Activated B cell treated with CpG ODN at 0.5 μM for 24 hours (primary cell): ENCODE measurements at regions of chr11 and their contacts with region 1.

Region 1: DNA sequence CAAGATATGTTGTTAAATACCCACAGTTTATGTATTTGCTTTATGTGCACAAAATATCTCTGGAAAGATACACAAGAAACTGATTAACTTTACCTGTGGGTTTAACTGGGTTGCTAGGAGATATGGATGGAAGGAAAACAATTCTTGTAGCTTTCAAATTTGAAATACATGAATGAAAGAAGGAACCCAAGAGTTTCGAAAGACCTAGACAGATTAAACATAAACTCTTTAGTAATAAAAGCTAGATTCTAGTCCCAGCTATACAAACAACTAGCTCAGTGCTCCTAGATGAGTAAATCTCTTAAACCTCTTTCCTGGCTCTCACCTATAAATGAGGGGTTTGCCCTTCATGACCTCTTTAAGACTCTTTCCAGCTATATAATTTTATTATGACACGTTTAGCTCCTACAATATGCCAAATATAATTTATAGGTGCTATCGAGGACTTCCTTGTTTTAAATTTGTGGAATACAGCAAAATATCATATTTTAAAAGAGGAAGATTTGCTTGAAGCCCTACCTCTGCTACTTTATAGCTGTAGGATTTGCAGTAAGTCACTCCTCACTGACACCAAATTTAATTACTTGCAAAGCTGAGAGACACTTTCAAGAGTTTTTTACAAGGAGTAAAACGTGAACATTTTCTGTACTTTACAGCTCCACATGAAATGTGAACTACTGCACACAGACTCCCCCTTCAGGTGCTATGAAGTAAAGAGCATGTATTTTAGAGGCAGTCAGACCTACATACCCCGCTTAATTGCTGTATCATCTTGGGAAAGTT is 50.7 kb downstream of the RRAS2 start:
- DNase-seq: no peak
- ATAC-seq: peak; percentile 51
- H3K4me3 Mint-ChIP-seq: no peak overlapping the region
- H3K27ac Mint-ChIP-seq: no peak overlapping the region
- H3K4me1 Mint-ChIP-seq: peaks cover 43% of the 10 kb centered on the region
- H3K27me3 Mint-ChIP-seq: no peaks in the 10 kb centered on the region
- CTCF ChIP-seq: peak; percentile 58

Region 2: DNA sequence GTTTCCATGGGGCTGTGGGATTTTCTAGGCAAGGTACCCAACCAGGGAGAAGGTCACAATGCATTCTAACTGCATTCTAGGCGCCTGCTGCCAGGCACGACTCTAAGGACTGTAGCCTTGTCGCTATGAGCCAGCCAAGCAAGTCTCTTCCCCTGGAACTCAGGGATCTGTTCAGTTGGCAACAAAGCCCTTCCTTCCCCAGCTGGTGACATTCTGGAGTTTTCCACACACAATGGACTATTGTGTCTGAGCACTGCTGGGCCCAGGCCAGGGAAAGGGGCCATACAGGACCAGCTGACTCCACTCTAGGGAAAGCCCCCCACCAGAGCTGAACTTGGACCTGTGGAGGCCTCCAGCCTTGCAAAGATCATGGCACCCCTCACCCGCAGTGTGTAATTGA is 66.1 kb before region 1 on chr11:
- CTCF ChIA-PET with region 1: no interaction called
- POLR2A ChIA-PET with region 1: no interaction called
- intact Hi-C with region 1: no loop called
- DNase-seq: no peak
- ATAC-seq: no peak
- H3K4me3 Mint-ChIP-seq: no peak overlapping the region
- H3K27ac Mint-ChIP-seq: no peak overlapping the region
- H3K4me1 Mint-ChIP-seq: peaks cover 20% of the 10 kb centered on the region
- H3K27me3 Mint-ChIP-seq: peaks cover 9% of the 10 kb centered on the region
- CTCF ChIP-seq: no peak

Region 3: GRCh38 chr11:14320020-14320419 is 11.7 kb after region 1 on chr11:
- CTCF ChIA-PET with region 1: interaction called, 4 read pairs
- POLR2A ChIA-PET with region 1: interaction called, 35 read pairs
- intact Hi-C with region 1: no loop called
- DNase-seq: no peak
- ATAC-seq: no peak
- H3K4me3 Mint-ChIP-seq: peak overlapping the region; percentile 65
- H3K27ac Mint-ChIP-seq: peak overlapping the region; percentile 83
- H3K4me1 Mint-ChIP-seq: peaks cover 93% of the 10 kb centered on the region
- H3K27me3 Mint-ChIP-seq: no peaks in the 10 kb centered on the region
- CTCF ChIP-seq: no peak

Region 4: DNA sequence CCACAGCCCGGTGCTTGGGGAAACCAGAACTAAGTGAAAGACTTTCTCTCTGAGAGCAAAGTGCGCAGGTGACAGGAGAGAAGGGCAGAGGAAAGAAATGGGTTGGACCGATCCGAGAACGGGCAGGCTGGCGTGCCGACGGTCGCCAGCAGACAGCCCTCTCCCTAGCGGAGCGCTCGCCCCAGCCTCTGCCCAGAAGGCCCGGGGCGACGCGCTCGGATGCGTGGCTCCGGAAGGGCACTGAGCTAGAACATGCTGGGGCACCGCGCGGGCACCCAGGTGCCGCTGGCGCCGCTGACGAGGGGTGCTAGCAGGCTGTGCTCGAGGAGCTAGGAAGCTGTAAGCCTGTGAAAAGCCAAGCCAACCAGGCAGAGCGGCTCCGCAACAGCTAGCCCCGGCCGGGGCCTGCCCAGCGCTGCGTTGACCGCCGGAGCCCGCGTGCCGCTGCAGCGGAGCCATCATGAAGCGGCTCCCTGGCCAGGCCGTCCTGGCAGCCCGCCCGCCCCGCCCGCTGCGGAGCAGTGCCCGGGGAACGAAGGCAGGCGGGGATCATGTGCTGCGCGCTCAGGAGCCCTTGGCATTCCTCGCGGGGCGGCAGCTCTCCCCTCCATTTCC is 72.7 kb after region 1 on chr11:
- CTCF ChIA-PET with region 1: interaction called, 6 read pairs
- POLR2A ChIA-PET with region 1: interaction called, 3 read pairs
- intact Hi-C with region 1: loop called (anchors 2 kb)
- DNase-seq: peak; percentile 64
- ATAC-seq: peak; percentile 96
- H3K4me3 Mint-ChIP-seq: peak overlapping the region; percentile 83
- H3K27ac Mint-ChIP-seq: peak overlapping the region; percentile 81
- H3K4me1 Mint-ChIP-seq: peaks cover 14% of the 10 kb centered on the region
- H3K27me3 Mint-ChIP-seq: no peaks in the 10 kb centered on the region
- CTCF ChIP-seq: no peak

Region 5: GRCh38 chr11:14413307-14414069 is 105.2 kb after region 1 on chr11:
- CTCF ChIA-PET with region 1: interaction called, 69 read pairs
- POLR2A ChIA-PET with region 1: no interaction called
- intact Hi-C with region 1: loop called (anchors 2 kb)
- DNase-seq: no peak
- ATAC-seq: no peak
- H3K4me3 Mint-ChIP-seq: no peak overlapping the region
- H3K27ac Mint-ChIP-seq: no peak overlapping the region
- H3K4me1 Mint-ChIP-seq: peaks cover 22% of the 10 kb centered on the region
- H3K27me3 Mint-ChIP-seq: no peaks in the 10 kb centered on the region
- CTCF ChIP-seq: no peak

Region 6: DNA sequence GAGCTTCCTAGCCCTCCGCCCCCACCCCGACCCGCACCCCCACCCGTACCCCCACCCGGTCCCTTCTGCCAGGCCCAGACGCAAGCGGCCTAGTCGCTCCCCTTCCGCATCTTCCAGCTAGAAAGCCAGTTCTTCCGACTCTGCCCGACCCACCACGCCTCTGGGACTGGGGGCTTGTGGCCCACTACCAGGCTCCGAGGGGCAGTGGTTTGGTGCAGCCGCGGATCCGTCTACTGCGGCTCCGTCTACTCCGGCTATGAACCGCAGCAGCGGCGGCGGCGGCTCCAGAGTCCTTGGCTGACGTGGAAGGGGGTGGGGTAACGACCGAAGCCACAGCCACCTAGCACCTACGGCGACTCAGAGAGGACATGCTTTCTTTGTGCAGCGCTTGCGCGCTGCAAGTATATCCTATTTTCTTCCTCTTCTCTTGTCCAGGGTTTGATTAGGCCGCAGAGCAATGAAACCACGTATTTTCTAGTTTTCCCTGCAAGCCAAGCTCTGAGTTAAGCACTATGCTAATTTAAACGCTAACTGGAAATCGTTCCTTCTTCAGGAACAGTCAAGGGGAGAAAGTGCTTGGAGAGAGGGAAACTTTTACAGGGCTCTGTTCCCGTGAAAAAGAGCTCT is 191.4 kb after region 1 on chr11 and contains the start of gene COPB1:
- CTCF ChIA-PET with region 1: no interaction called
- POLR2A ChIA-PET with region 1: no interaction called
- intact Hi-C with region 1: no loop called
- DNase-seq: peak; percentile 81
- ATAC-seq: peak; percentile 95
- H3K4me3 Mint-ChIP-seq: peak within 1 kb of the TSS; percentile 100
- H3K27ac Mint-ChIP-seq: peak within 1 kb of the TSS; percentile 96
- H3K4me1 Mint-ChIP-seq: peaks cover 41% of the 10 kb centered on the region
- H3K27me3 Mint-ChIP-seq: no peaks in the 10 kb centered on the region
- CTCF ChIP-seq: no peak
- total RNA-seq, gene COPB1: 80.7 and 90.1 TPM in 2 replicates